Mammary epithelial cell (primary cell): ENCODE measurements at regions of chr12 and their contacts with region 1.

Region 1: DNA sequence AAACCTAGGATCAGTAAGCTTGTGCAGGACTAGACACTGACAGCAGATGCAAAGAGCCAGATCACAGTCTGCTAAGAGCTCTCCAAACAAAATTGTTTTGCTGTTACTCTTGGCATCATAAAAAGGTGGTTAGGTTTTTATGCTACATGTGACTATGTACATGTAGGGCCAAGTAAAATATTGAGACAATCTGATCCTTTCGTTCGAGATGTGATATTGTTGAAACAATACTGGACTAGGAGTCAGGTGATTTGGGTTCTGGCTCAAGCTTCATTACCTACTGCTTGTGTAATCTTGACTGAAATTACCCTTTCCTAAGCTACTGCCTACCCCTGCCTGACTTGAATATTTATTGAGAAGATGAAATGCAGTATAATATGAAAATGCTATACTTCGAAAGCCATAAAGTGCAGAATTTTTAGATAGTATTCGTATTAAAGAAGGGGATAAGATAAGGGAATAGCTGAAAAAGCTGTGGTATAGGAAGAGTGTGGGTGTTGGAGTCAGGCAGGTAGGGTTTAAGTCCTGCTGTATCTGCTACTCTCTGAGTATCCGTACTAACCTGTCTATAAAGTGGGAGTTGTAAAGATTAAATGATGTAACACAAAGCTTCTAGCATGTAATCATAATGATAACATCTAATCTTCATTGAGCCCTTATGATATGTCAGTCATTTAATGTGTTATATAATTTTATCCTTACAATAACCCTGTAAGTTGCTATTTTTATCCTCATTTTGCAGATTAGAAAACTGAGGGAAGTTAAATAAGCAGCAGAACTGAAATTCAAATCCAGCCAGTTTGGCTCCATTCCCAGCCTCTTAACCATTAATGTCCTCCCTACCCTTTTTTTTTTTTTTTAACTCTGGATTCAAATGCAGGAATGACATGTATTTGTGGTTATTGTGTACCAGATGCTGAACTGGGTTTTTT is 38.6 kb upstream of the ATF1 start:
- DNase-seq: no peak
- H3K4me3 ChIP-seq: no peak overlapping the region
- H3K27ac ChIP-seq: no peak overlapping the region
- H3K4me1 ChIP-seq: peaks cover 8% of the 10 kb centered on the region
- H3K27me3 ChIP-seq: no peaks in the 10 kb centered on the region
- CTCF ChIP-seq: no peak

Region 2: GRCh38 chr12:50614167-50614759 is 111.0 kb before region 1 on chr12:
- CTCF ChIA-PET with region 1: no interaction called
- dilution Hi-C with region 1: no loop called
- in situ Hi-C with region 1: no loop called
- intact Hi-C with region 1: no loop called
- DNase-seq: peak; percentile 81
- H3K4me3 ChIP-seq: no peak overlapping the region
- H3K27ac ChIP-seq: peak overlapping the region; percentile 95
- H3K4me1 ChIP-seq: peaks cover 61% of the 10 kb centered on the region
- H3K27me3 ChIP-seq: no peaks in the 10 kb centered on the region
- CTCF ChIP-seq: no peak

Region 3: DNA sequence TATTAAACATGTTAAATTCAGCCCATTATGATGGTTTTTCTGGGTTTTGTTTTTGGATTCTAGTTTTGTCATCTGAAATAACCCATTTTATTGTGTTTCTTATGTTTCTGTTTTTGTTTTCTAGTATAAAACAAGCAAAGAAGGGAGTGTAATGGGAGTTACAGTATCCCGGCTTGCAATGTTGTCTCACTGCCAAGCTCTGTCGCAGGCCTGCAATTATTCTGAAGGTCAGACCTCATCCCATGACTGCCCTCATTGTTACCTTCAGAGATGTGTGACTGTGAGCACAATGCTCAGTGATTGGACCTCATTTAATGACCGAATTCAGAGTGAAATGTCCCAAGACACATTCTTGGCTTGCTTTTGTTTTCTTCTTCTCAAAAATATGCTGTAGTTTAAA is 34.4 kb before region 1 on chr12:
- CTCF ChIA-PET with region 1: no interaction called
- dilution Hi-C with region 1: loop called (anchors 5 kb)
- in situ Hi-C with region 1: no loop called
- intact Hi-C with region 1: no loop called
- DNase-seq: no peak
- H3K4me3 ChIP-seq: no peak overlapping the region
- H3K27ac ChIP-seq: no peak overlapping the region
- H3K4me1 ChIP-seq: no peaks in the 10 kb centered on the region
- H3K27me3 ChIP-seq: no peaks in the 10 kb centered on the region
- CTCF ChIP-seq: no peak